BJ (cell line): ENCODE measurements at regions of chr5 and their contacts with region 1.

Region 1: GRCh38 chr5:177497292-177498033 is at the start of gene PDLIM7:
- DNase-seq: peak; percentile 89
- H3K4me3 ChIP-seq: peak within 1 kb of the TSS; percentile 86
- H3K27me3 ChIP-seq: no peaks in the 10 kb centered on the region
- CTCF ChIP-seq: peak; percentile 45
- polyA plus RNA-seq, gene PDLIM7: 344 and 624 TPM in 2 replicates

Region 2: GRCh38 chr5:177228751-177229150 is 268.7 kb before region 1 on chr5:
- CTCF ChIA-PET with region 1: no interaction called
- POLR2A ChIA-PET with region 1: no interaction called
- DNase-seq: no peak
- H3K4me3 ChIP-seq: no peak overlapping the region
- H3K27me3 ChIP-seq: no peaks in the 10 kb centered on the region
- CTCF ChIP-seq: no peak

Region 3: GRCh38 chr5:177256296-177256695 is 241.2 kb before region 1 on chr5:
- CTCF ChIA-PET with region 1: no interaction called
- POLR2A ChIA-PET with region 1: no interaction called
- DNase-seq: no peak
- H3K4me3 ChIP-seq: no peak overlapping the region
- H3K27me3 ChIP-seq: no peaks in the 10 kb centered on the region
- CTCF ChIP-seq: no peak

Region 4: GRCh38 chr5:177311723-177312648 is 185.5 kb before region 1 on chr5 and contains the start of gene MXD3:
- CTCF ChIA-PET with region 1: interaction called, 12 read pairs
- POLR2A ChIA-PET with region 1: interaction called, 3 read pairs
- DNase-seq: peak; percentile 62
- H3K4me3 ChIP-seq: peak within 1 kb of the TSS; percentile 66
- H3K27me3 ChIP-seq: no peaks in the 10 kb centered on the region
- CTCF ChIP-seq: no peak
- polyA plus RNA-seq, gene MXD3: 11.8 and 18.1 TPM in 2 replicates

Region 5: GRCh38 chr5:177403792-177404640 is 93.4 kb before region 1 on chr5:
- CTCF ChIA-PET with region 1: interaction called, 61 read pairs
- POLR2A ChIA-PET with region 1: interaction called, 6 read pairs
- DNase-seq: no peak
- H3K4me3 ChIP-seq: peak overlapping the region; percentile 49
- H3K27me3 ChIP-seq: peaks cover 32% of the 10 kb centered on the region
- CTCF ChIP-seq: peak; percentile 78

Region 6: DNA sequence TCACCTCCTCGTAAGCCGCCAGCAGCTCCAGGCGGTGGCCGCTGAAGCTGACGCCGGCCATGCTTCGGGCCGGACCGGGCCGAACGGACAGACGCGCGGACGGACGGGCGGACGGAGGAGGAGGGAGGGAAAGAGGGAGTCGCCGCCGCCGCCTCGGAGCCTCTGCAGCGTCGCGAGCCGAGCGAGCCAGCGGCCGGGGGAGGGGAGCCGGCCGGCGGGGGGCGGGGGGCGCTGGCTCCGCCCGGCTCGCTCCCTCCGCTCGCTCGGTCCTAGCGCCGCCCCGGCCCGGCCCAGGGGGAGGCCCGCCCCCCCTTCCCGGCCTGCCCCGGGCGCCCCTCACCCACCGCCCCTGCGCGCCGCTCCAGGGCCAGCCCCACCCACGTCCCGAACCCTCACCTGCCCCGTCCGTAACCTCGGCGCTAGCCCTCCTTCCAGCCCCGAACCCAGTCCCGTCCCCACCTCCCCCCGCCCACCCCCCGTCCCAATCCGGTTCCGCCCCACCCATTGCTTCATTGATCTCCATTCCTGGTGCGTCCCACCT is 23.9 kb before region 1 on chr5 and contains the start of gene DBN1:
- CTCF ChIA-PET with region 1: interaction called, 85 read pairs
- POLR2A ChIA-PET with region 1: interaction called, 6 read pairs
- DNase-seq: no peak
- H3K4me3 ChIP-seq: peak within 1 kb of the TSS; percentile 54
- H3K27me3 ChIP-seq: no peaks in the 10 kb centered on the region
- CTCF ChIP-seq: no peak
- polyA plus RNA-seq, gene DBN1: 103 and 176 TPM in 2 replicates

Region 7: DNA sequence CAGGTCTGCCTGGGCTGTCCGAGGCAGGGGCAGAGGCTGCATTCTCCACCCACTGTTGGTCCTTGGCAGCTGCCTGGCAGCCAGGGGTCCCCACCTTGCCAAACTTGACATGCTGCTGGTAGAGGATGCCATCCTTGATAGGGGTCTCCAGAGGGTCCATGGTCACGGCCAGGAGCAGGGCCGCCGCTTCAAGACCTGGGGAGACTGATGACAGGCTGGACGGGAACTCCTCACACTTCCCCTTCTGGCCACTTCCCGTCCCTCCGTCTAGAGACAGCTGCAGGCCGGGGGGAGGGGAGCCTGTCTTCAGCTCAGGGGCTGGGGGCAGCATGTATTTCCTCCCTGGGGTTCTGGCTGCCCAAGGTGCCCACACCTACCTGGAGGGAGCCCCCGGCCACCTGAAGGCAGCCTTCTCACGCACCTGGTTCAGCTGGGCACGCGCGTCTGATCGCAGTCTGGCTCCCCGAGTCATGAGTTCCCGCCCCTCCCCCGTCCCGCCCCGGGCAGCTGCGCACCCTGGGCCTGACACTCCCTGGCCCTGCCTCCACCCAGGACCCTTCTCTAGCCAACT is 12.0 kb after region 1 on chr5 and contains the start of gene DOK3:
- CTCF ChIA-PET with region 1: interaction called, 26 read pairs
- POLR2A ChIA-PET with region 1: interaction called, 9 read pairs
- DNase-seq: no peak
- H3K4me3 ChIP-seq: no peak within 1 kb of the TSS
- H3K27me3 ChIP-seq: no peaks in the 10 kb centered on the region
- CTCF ChIP-seq: no peak
- polyA plus RNA-seq, gene DOK3: 0.92 and 1.2 TPM in 2 replicates

Region 8: GRCh38 chr5:177546258-177546741 is 48.8 kb after region 1 on chr5:
- CTCF ChIA-PET with region 1: interaction called, 13 read pairs
- POLR2A ChIA-PET with region 1: interaction called, 4 read pairs
- DNase-seq: peak; percentile 97
- H3K4me3 ChIP-seq: no peak overlapping the region
- H3K27me3 ChIP-seq: no peaks in the 10 kb centered on the region
- CTCF ChIP-seq: peak; percentile 16; the same call in 1 of the 2 replicates